ENCODE measurements at regions of chr1 and their contacts with region 1.

Region 1: GRCh38 chr1:110780600-110781484 is 92.1 kb upstream of the CD53 start:
- DNase-seq: peak; percentile 84 to 93 (median 89)
- H3K4me3 ChIP-seq: peak overlapping the region in 2 of 7 experiments; percentile 16 to 57
- H3K27ac ChIP-seq: no peak overlapping the region
- H3K4me1 ChIP-seq: peaks cover 4 to 17% (median 11%) of the 10 kb centered on the region in 4 experiments
- H3K27me3 ChIP-seq: peaks cover 0 to 5% (median 0%) of the 10 kb centered on the region in 5 experiments

Region 2: DNA sequence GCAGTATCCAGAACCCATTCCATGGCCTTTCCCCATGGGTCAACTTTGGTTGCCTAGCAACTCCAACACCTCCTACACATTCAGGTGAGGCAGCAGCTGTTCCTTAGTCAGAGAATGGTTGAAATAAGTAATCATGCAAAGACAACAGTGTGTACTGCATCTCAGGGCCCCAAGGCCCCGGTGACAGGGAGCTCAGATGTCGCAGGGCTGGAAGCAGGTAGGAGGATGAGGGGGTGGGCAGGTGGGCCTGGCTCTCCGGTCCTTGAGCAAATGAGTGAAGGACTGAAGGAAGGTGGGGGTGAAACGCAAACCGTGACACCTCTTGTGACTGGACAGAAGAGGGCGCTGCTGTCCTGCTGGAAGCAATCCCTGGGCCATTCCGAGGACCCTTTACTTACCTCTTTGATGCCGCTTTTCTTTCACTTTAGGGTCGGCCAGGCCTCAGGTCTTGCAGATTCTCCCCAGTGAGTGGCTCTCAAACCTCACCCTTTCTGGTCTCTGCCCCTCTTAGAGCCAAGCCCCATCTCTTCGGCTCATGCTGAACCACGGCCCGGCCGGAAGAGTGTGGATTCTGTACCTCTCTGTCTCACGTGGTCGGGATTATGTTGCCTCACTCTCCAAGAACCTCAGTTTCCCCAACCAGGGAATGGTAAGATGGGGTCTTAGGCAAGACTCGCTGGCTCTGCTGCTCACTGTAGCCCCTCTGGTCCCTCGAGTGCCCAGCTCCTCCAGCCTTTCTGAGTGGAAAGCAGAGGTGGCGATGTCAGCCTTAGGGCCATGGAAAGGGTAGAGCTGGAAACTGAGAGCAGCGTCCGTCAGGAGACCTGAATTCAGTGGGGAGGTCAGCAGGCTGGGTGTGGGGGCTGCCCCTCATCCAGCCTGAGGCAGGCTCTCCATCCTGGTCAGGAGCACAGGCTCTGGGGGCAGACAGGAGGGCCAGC is 256.3 kb before region 1 on chr1:
- CTCF ChIA-PET with region 1: interaction called, 23 read pairs
- POLR2A ChIA-PET with region 1: no interaction called
- DNase-seq: peak; percentile 70 to 82 (median 79)
- H3K4me3 ChIP-seq: peak overlapping the region in 1 of 7 experiments; percentile 3
- H3K27ac ChIP-seq: no peak overlapping the region
- H3K4me1 ChIP-seq: peaks cover 0 to 6% (median 2%) of the 10 kb centered on the region in 4 experiments
- H3K27me3 ChIP-seq: peaks cover 0 to 30% (median 14%) of the 10 kb centered on the region in 5 experiments

Region 3: GRCh38 chr1:110619412-110620249 is 161.2 kb before region 1 on chr1:
- CTCF ChIA-PET with region 1: interaction called, 64 read pairs
- POLR2A ChIA-PET with region 1: interaction called, 3 read pairs
- DNase-seq: peak; percentile 85 to 94 (median 93)
- H3K4me3 ChIP-seq: peak overlapping the region in 6 of 7 experiments; percentile 46 to 76 (median 62)
- H3K27ac ChIP-seq: peak overlapping the region in 1 of 2 experiments; percentile 12
- H3K4me1 ChIP-seq: peaks cover 4 to 40% (median 36%) of the 10 kb centered on the region in 4 experiments
- H3K27me3 ChIP-seq: peaks cover 0 to 3% (median 1%) of the 10 kb centered on the region in 5 experiments

Region 4: DNA sequence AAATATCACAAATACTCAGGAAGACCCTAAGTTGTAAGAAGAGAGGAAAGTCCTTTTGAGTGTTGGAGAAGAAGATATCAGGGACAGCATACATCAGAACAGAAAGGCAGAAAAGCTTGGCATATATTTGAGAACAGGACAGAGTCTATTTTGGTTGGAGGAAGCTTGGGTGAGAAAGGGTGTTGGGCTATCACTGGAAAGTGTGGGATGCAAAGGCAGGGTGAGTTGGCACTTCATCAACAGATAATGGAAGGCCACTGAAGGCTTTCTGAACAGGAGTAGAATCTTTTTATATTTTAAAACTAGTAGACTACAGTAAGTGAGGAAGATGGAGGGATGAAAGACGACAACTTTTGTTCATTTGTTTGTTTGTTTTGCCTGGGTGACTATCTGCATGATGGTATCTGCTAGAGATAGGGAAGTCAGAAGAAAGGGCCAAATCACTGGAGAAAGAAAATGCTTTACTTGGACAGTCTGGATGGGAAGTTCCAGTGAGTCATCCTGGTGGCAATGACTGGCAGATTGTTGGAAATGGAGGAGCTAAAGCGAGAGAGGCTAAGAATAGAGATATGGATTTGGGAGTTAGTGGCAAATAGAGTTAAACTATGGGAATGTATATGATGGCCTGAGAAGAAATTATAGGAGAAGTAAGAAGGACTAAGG is 141.0 kb before region 1 on chr1:
- CTCF ChIA-PET with region 1: interaction called, 15 read pairs
- POLR2A ChIA-PET with region 1: no interaction called
- DNase-seq: peak in 2 of 3 donors; percentile 57 to 77
- H3K4me3 ChIP-seq: no peak overlapping the region
- H3K27ac ChIP-seq: no peak overlapping the region
- H3K4me1 ChIP-seq: peaks cover 3 to 17% (median 16%) of the 10 kb centered on the region in 4 experiments
- H3K27me3 ChIP-seq: peaks cover 0 to 10% (median 0%) of the 10 kb centered on the region in 5 experiments

Region 5: GRCh38 chr1:110686188-110686587 is 94.7 kb before region 1 on chr1:
- CTCF ChIA-PET with region 1: no interaction called
- POLR2A ChIA-PET with region 1: no interaction called
- DNase-seq: peak in 2 of 3 donors; percentile 31 to 35
- H3K4me3 ChIP-seq: no peak overlapping the region
- H3K27ac ChIP-seq: no peak overlapping the region
- H3K4me1 ChIP-seq: no peaks in the 10 kb centered on the region
- H3K27me3 ChIP-seq: peaks cover 0 to 13% (median 2%) of the 10 kb centered on the region in 5 experiments

Region 6: DNA sequence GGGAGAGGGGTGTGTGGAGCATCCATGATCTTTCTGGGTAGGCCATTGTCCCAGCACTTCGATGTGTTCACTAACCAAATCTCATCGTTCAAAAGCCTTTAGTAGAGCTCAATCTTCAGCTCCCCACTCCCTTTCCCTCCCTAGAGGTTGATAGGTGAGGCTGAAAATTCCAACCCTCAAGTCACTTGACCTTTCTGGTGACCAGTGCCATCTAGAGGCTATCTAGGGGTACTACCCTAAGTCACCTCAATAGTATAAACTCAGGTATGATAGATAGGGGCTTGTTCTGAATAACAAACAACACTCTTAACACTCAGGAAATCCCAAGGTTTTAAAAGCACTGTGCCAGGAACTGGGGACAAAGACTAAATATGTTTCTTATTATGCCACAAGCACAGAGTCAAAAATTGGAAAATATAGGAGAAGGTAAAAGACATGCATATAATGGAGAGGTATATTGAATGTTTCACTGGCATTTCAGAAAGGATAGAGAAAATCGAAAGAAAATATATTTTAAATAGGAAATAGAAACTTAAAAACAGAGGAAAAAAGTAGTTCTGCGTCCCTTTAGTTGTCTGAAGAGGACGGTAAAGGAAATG is 49.2 kb after region 1 on chr1:
- CTCF ChIA-PET with region 1: interaction called, 51 read pairs
- POLR2A ChIA-PET with region 1: no interaction called
- DNase-seq: peak; percentile 51 to 69 (median 68)
- H3K4me3 ChIP-seq: no peak overlapping the region
- H3K27ac ChIP-seq: no peak overlapping the region
- H3K4me1 ChIP-seq: no peaks in the 10 kb centered on the region
- H3K27me3 ChIP-seq: no peaks in the 10 kb centered on the region

Measured in common myeloid progenitor, CD34-positive (primary cell).